ENCODE measurements at regions of chr3 and their contacts with region 1.

Region 1: GRCh38 chr3:141460097-141460704 is 26.6 kb upstream of the RASA2 start:
- DNase-seq: peak; percentile 83 to 89
- ATAC-seq: peak; percentile 92 to 97 (median 96)
- H3K4me3 ChIP-seq: no peak overlapping the region
- H3K27ac ChIP-seq: no peak overlapping the region
- H3K4me1 ChIP-seq: peaks cover 0 to 12% (median 0%) of the 10 kb centered on the region in 9 donors
- H3K27me3 ChIP-seq: no peaks in the 10 kb centered on the region
- CTCF ChIP-seq: peak; percentile 77 to 95 (median 90)

Region 2: DNA sequence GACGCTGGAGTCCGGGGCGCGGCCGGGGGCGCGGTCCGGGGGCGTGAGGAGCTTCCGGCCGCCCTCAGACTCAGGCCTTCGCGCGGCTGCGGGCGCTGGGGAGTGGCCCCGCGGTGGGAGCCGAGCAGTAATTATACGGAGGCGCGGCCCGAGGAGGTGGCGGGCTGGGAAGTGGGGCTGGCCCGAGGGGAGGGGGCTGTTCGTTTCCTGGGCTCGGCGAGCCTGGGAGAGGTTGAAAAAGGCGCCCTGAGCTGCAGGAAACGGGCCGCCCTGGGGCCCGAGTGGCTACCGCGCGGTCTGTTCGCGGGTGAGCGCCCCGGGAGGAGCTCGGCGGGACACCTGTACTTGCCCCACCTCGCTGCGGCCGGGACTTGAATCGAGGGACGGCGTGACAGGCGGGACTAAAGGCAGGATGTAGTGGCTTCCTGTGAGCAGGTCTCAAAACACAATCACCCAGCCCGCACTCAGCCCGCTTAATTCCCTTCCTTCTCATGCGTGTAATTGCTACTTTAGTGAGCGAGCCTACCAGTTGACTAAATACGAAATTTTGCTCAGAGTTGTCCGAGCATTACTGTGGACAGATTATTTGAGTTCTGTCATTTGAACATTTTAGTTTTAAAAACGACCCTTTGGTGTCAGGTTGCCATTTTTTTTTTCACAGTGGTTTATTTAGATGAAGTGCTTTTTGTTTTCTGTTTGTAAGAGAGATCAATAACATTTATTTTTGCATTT is 27.5 kb after region 1 on chr3:
- intact Hi-C with region 1: loop called in 1 of 10 experiments (anchors 1 kb)
- DNase-seq: peak; percentile 54 to 68
- ATAC-seq: peak; percentile 56 to 81 (median 68)
- H3K4me3 ChIP-seq: peak overlapping the region; percentile 69 to 92 (median 86)
- H3K27ac ChIP-seq: peak overlapping the region; percentile 86 to 97 (median 95)
- H3K4me1 ChIP-seq: peaks cover 0 to 76% (median 19%) of the 10 kb centered on the region in 9 donors
- H3K27me3 ChIP-seq: no peaks in the 10 kb centered on the region
- CTCF ChIP-seq: no peak

Region 3: GRCh38 chr3:141644931-141645330 is 184.7 kb after region 1 on chr3:
- intact Hi-C with region 1: loop called in 2 of 10 experiments (anchors 5 to 10 kb)
- DNase-seq: peak; percentile 69 to 84
- ATAC-seq: peak; percentile 62 to 90 (median 80)
- H3K4me3 ChIP-seq: no peak overlapping the region
- H3K27ac ChIP-seq: no peak overlapping the region
- H3K4me1 ChIP-seq: peaks cover 0 to 7% (median 0%) of the 10 kb centered on the region in 9 donors
- H3K27me3 ChIP-seq: no peaks in the 10 kb centered on the region
- CTCF ChIP-seq: peak; percentile 34 to 82 (median 64)

Measured in heart right ventricle (tissue), 16 donors.